ENCODE measurements at regions of chr3 and their contacts with region 1.

Region 1: GRCh38 chr3:104854468-104854867 is 512.2 kb upstream of the ALCAM start:
- DNase-seq: no peak
- ATAC-seq: no peak
- H3K4me3 ChIP-seq: no peak overlapping the region
- H3K4me3 Mint-ChIP-seq: no peak overlapping the region
- H3K27ac ChIP-seq: no peak overlapping the region
- H3K27ac Mint-ChIP-seq: no peak overlapping the region
- H3K4me1 ChIP-seq: no peaks in the 10 kb centered on the region
- H3K4me1 Mint-ChIP-seq: no peaks in the 10 kb centered on the region
- H3K27me3 ChIP-seq: no peaks in the 10 kb centered on the region
- H3K27me3 Mint-ChIP-seq: peaks cover 3% of the 10 kb centered on the region
- CTCF ChIP-seq: no peak

Region 2: GRCh38 chr3:105166893-105167292 is 312.4 kb after region 1 on chr3:
- CTCF ChIA-PET with region 1: no interaction called
- POLR2A ChIA-PET with region 1: no interaction called
- intact Hi-C with region 1: no loop called
- DNase-seq: no peak
- ATAC-seq: no peak
- H3K4me3 ChIP-seq: no peak overlapping the region
- H3K4me3 Mint-ChIP-seq: no peak overlapping the region
- H3K27ac ChIP-seq: no peak overlapping the region
- H3K27ac Mint-ChIP-seq: no peak overlapping the region
- H3K4me1 ChIP-seq: no peaks in the 10 kb centered on the region
- H3K4me1 Mint-ChIP-seq: no peaks in the 10 kb centered on the region
- H3K27me3 ChIP-seq: no peaks in the 10 kb centered on the region
- H3K27me3 Mint-ChIP-seq: no peaks in the 10 kb centered on the region
- CTCF ChIP-seq: no peak

Region 3: GRCh38 chr3:105527949-105528348 is 673.5 kb after region 1 on chr3:
- CTCF ChIA-PET with region 1: no interaction called
- POLR2A ChIA-PET with region 1: interaction called, 11 read pairs
- intact Hi-C with region 1: no loop called
- DNase-seq: no peak
- ATAC-seq: no peak
- H3K4me3 ChIP-seq: no peak overlapping the region
- H3K4me3 Mint-ChIP-seq: no peak overlapping the region
- H3K27ac ChIP-seq: no peak overlapping the region
- H3K27ac Mint-ChIP-seq: no peak overlapping the region
- H3K4me1 ChIP-seq: no peaks in the 10 kb centered on the region
- H3K4me1 Mint-ChIP-seq: no peaks in the 10 kb centered on the region
- H3K27me3 ChIP-seq: no peaks in the 10 kb centered on the region
- H3K27me3 Mint-ChIP-seq: no peaks in the 10 kb centered on the region
- CTCF ChIP-seq: no peak

Measured in B cell (primary cell).